Esophagus squamous epithelium (tissue), 5 donors: ENCODE measurements at regions of chr1 and their contacts with region 1.

Region 1: GRCh38 chr1:29235955-29236684 is at the start of gene PTPRU:
- DNase-seq: no peak
- H3K4me3 ChIP-seq: peak within 1 kb of the TSS; percentile 46 to 89 (median 56)
- H3K27ac ChIP-seq: peak within 1 kb of the TSS; percentile 36 to 85 (median 54)
- H3K4me1 ChIP-seq: peaks cover 18 to 37% (median 19%) of the 10 kb centered on the region in 3 donors
- H3K27me3 ChIP-seq: peaks cover 0 to 51% (median 0%) of the 10 kb centered on the region in 4 donors
- CTCF ChIP-seq: peak; percentile 61 to 98 (median 96)
- POLR2A ChIP-seq: no peak
- total RNA-seq, gene PTPRU: 4.3 to 15.9 (median 7.5) TPM

Region 2: GRCh38 chr1:29290414-29290985 is 54.4 kb after region 1 on chr1:
- intact Hi-C with region 1: no loop called
- DNase-seq: no peak
- H3K4me3 ChIP-seq: no peak overlapping the region
- H3K27ac ChIP-seq: no peak overlapping the region
- H3K4me1 ChIP-seq: peaks cover 0 to 8% (median 0%) of the 10 kb centered on the region in 3 donors
- H3K27me3 ChIP-seq: no peaks in the 10 kb centered on the region
- CTCF ChIP-seq: no peak
- POLR2A ChIP-seq: no peak

Region 3: DNA sequence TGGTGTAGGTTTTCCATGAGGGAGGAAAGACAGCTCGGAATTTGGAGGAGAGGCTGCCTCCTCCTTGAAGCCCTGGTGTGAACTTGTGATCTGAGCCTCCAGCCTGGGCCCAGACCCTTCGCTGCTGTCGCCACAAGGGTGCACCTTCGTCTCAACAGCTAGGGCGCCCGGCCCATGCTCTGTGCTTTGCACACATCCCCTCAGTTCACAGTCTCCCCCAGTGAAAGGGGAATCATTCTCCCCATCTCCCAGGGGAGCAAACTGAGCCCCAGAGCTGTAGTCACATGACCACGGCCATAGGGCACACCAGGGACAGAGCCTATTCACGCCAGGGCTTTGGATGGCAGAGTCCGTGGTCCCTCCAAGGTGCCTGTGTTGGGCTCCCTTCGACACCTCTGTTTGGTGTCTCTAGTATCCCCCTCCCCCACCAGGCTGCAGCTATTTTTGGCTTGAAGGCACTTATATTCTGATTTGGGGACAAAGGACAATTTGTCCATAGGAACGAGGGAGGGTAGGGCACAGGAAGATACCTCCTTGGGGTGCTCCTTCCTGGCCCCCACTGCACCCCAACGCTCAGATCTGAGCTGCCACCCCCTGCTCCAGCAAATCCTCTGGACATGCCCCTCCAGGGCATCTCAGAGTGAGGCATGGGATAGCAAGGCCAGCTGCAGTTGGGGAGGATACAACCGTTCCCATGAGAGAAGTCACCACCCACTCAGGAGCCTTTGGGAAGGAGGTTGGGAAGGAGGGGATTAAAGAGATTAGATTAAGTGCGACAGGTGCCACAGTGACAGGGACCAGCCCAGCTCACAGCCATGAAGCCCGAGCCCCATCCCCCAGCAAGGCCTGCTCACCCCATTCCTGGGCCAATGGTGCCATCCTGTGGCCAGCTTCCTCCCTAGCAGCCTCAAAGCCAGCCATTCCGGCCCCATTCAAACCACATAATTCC is 1471.6 kb after region 1 on chr1:
- intact Hi-C with region 1: loop called (anchors 5 kb)
- DNase-seq: no peak
- H3K4me3 ChIP-seq: no peak overlapping the region
- H3K27ac ChIP-seq: no peak overlapping the region
- H3K4me1 ChIP-seq: peaks cover 5 to 39% (median 6%) of the 10 kb centered on the region in 3 donors
- H3K27me3 ChIP-seq: peaks cover 0 to 23% (median 0%) of the 10 kb centered on the region in 4 donors
- CTCF ChIP-seq: peak; percentile 42 to 94 (median 78)
- POLR2A ChIP-seq: no peak